PC-3 (cell line): ENCODE measurements at regions of chr14 and their contacts with region 1.

Region 1: GRCh38 chr14:92612988-92613658 is 99.5 kb downstream of the RIN3 start:
- DNase-seq: peak; percentile 44
- ATAC-seq: no peak
- H3K4me3 ChIP-seq: no peak overlapping the region
- H3K27ac ChIP-seq: no peak overlapping the region
- H3K4me1 ChIP-seq: peaks cover 41% of the 10 kb centered on the region
- H3K27me3 ChIP-seq: no peaks in the 10 kb centered on the region
- CTCF ChIP-seq: peak; percentile 91

Region 2: DNA sequence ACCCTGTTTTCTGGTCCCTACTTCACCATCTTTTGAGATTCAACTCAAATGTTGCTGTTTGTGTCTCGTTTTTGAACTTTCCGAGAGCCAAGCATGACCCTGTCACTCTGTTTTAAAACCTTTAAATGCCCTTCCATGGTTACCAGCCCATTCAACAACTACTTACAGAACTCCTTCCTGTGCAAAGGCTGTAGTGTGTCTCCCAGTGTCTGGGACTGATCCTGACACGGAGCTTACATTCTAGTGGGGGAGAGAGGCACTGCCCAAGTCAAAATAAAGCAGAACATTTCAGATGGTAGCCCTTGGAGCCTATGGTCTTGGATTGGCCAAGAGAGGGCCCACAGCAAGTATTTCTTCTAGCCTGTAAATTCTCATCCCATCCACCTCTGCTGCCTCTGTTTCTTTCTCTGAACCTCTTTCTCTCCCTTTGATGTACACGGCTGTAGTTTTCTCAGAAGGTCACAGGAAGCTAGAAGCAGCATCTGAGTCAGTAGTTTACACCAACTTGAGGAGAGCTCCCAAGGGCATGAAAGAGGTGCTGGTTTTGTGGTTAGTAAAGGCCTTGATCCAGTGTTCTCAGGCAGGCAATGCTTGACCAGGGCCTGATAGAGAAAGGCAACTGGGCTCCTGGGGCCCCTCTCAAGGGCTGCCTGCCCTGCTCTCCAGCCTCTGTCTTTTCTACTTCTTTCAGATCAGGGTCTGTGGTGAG is 332.4 kb before region 1 on chr14:
- CTCF ChIA-PET with region 1: no interaction called
- POLR2A ChIA-PET with region 1: no interaction called
- intact Hi-C with region 1: no loop called
- DNase-seq: no peak
- ATAC-seq: no peak
- H3K4me3 ChIP-seq: no peak overlapping the region
- H3K27ac ChIP-seq: no peak overlapping the region
- H3K4me1 ChIP-seq: no peaks in the 10 kb centered on the region
- H3K27me3 ChIP-seq: peaks cover 11% of the 10 kb centered on the region
- CTCF ChIP-seq: no peak

Region 3: DNA sequence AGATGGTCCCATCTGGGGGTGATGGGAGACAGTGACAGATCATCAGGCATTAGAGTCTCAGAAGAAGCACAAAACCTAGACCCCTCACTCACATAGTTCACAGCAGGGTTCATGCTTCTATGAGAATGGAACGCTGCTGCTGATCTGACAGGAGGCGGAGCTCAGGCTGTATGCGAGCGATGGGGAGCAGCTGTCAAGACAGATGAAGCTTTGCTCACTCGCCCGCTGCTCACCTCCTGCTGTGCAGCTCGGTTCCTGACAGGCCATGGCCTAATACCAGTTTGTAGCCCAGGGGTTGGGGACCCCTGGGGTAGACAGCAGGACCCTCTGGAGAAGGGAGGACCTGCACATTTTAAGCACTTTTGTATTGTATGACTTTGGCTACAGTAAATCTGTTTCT is 24.1 kb after region 1 on chr14:
- CTCF ChIA-PET with region 1: no interaction called
- POLR2A ChIA-PET with region 1: interaction called, 13 read pairs
- intact Hi-C with region 1: no loop called
- DNase-seq: no peak
- ATAC-seq: no peak
- H3K4me3 ChIP-seq: no peak overlapping the region
- H3K27ac ChIP-seq: no peak overlapping the region
- H3K4me1 ChIP-seq: no peaks in the 10 kb centered on the region; the same call in 1 of the 2 replicates
- H3K27me3 ChIP-seq: no peaks in the 10 kb centered on the region
- CTCF ChIP-seq: no peak

Region 4: GRCh38 chr14:92670160-92670559 is 57.0 kb after region 1 on chr14:
- CTCF ChIA-PET with region 1: interaction called, 12 read pairs
- POLR2A ChIA-PET with region 1: no interaction called
- intact Hi-C with region 1: no loop called
- DNase-seq: peak; percentile 11
- ATAC-seq: peak; percentile 82
- H3K4me3 ChIP-seq: no peak overlapping the region
- H3K27ac ChIP-seq: no peak overlapping the region
- H3K4me1 ChIP-seq: 0 out of 2 replicates have a peak, but pooled peaks cover 4% of the 10 kb centered on the region
- H3K27me3 ChIP-seq: no peaks in the 10 kb centered on the region
- CTCF ChIP-seq: no peak